Naive thymus-derived CD8-positive, alpha-beta T cell (primary cell): ENCODE measurements at regions of chr14 and their contacts with region 1.

Region 1: DNA sequence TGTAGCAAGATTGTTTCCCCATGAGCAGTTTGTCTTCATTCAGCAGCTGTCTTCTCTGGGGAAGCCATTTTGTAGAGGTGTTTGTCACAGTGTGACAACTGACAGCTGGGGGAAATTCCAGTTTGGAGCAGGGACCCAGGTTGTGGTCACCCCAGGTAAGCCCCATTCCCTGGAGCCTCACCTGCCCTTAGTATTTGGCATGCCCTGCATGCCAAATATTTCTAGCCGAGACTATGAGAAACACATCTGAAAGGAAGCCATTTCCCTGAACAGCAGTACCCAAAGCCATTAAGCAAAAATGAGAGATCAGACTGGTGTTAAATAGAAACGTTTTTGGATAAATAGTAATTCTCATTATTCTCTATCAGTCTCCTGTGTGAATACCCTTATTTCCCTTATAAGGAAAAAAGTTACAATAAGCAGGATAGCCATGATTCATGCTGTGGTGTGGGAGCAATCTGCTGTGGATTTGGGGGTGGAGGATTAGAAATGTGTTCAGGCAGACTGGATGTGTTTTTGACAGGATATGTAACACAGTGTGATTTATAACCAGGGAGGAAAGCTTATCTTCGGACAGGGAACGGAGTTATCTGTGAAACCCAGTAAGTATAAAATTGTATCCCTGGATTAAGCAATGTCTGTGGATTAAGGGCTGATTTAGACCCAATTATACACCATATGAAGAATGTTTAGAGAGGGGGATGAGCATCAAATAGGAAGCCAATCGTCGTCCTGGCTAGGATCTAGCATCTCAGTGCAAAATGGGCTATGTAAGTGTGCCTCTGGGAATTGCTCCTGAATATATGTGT is 68.9 kb downstream of the DAD1 start:
- DNase-seq: no peak
- ATAC-seq: peak; percentile 19
- H3K4me3 Mint-ChIP-seq: peak overlapping the region; percentile 80 to 94 (median 90)
- H3K27ac Mint-ChIP-seq: peak overlapping the region; percentile 94 to 99 (median 98)
- H3K4me1 Mint-ChIP-seq: peaks cover 44 to 100% (median 89%) of the 10 kb centered on the region in 4 donors
- H3K27me3 Mint-ChIP-seq: no peaks in the 10 kb centered on the region

Region 2: DNA sequence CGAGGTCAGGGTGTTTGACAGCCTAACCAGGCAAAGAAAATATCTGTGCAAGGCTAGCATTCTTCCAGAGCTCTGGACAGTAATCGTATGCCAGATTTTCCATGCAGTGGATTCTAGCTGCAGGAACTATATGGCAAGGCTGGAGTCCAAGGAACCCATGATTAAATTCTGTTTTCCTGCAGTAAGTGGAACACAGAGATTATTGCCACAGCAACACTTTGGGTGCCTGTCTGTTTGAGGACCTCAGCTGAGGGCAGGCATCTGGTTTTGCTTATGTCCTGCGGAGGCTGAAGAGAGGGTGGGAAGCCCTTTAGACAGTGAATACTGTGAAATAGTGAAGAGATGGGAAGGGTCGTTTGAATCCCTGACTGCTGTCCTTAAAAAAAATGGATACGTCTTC is 35.4 kb before region 1 on chr14:
- POLR2A ChIA-PET with region 1: no interaction called
- DNase-seq: no peak
- ATAC-seq: no peak
- H3K4me3 Mint-ChIP-seq: peak overlapping the region in 9 of 10 donors; percentile 71 to 83 (median 78)
- H3K27ac Mint-ChIP-seq: peak overlapping the region in 7 of 10 donors; percentile 9 to 91 (median 65)
- H3K4me1 Mint-ChIP-seq: peaks cover 0 to 92% (median 4%) of the 10 kb centered on the region in 4 donors
- H3K27me3 Mint-ChIP-seq: no peaks in the 10 kb centered on the region

Region 3: GRCh38 chr14:22497144-22497423 is 23.0 kb before region 1 on chr14:
- POLR2A ChIA-PET with region 1: interaction called, 405 read pairs
- DNase-seq: no peak
- ATAC-seq: peak; percentile 26 to 35
- H3K4me3 Mint-ChIP-seq: peak overlapping the region; percentile 78 to 93 (median 88)
- H3K27ac Mint-ChIP-seq: peak overlapping the region in 9 of 10 donors; percentile 88 to 98 (median 92)
- H3K4me1 Mint-ChIP-seq: peaks cover 4 to 64% (median 26%) of the 10 kb centered on the region in 4 donors
- H3K27me3 Mint-ChIP-seq: no peaks in the 10 kb centered on the region

Region 4: GRCh38 chr14:22505697-22506377 is 14.2 kb before region 1 on chr14:
- POLR2A ChIA-PET with region 1: interaction called, 405 read pairs
- DNase-seq: peak in 1 of 10 donors; percentile 26
- ATAC-seq: peak in 1 of 2 donors; percentile 38
- H3K4me3 Mint-ChIP-seq: peak overlapping the region; percentile 79 to 94 (median 86)
- H3K27ac Mint-ChIP-seq: peak overlapping the region; percentile 86 to 99 (median 98)
- H3K4me1 Mint-ChIP-seq: peaks cover 13 to 69% (median 57%) of the 10 kb centered on the region in 4 donors
- H3K27me3 Mint-ChIP-seq: no peaks in the 10 kb centered on the region

Region 5: DNA sequence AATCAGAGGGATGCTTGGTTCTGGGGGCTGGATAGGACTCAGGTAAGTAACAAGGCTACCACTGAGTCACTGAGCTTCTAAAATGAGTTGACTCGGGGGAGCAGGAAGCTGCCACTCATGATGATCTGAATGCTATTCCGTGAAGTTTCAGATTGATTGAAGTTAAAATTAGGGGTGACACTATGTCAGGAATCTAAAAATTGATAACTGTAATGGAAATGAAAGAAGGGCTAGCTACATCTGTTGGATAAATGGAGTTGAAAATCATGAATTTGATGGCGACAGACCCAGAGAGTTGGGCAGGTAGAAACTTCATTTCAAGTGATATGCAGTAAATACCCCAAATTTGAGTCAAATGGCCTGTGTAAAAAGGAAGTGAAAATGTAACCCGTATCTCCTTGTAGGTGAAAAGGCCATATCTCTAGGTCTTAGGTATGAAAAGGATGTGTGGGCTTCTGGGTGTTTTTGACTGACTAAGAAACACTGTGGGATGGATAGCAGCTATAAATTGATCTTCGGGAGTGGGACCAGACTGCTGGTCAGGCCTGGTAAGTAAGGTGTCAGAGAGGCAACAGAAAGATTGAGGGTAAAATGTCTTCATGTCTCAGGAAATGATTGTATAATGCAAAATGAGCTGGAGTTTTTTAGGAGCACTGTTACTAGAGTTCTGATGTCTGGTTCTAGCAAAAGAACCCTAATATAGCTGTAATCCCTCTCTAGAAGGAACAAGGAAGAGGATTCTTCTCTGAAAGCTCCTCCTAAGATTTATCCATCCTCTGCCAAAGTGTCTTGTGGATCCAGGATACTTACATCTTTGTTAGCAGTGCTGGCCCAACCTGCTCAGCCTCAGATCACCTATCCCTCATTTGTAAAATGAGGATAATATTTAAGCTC is 11.6 kb after region 1 on chr14:
- POLR2A ChIA-PET with region 1: interaction called, 405 read pairs
- DNase-seq: peak in 2 of 10 donors; percentile 55 to 58
- ATAC-seq: peak; percentile 53 to 69
- H3K4me3 Mint-ChIP-seq: peak overlapping the region; percentile 75 to 91 (median 88)
- H3K27ac Mint-ChIP-seq: peak overlapping the region; percentile 76 to 99 (median 96)
- H3K4me1 Mint-ChIP-seq: peaks cover 44 to 92% (median 89%) of the 10 kb centered on the region in 4 donors
- H3K27me3 Mint-ChIP-seq: no peaks in the 10 kb centered on the region

Region 6: GRCh38 chr14:22536853-22537338 is 16.8 kb after region 1 on chr14:
- POLR2A ChIA-PET with region 1: interaction called, 405 read pairs
- DNase-seq: peak in 5 of 10 donors; percentile 47 to 86 (median 69)
- ATAC-seq: peak; percentile 74 to 81
- H3K4me3 Mint-ChIP-seq: peak overlapping the region; percentile 70 to 89 (median 83)
- H3K27ac Mint-ChIP-seq: peak overlapping the region; percentile 90 to 100 (median 97)
- H3K4me1 Mint-ChIP-seq: peaks cover 57 to 96% (median 94%) of the 10 kb centered on the region in 4 donors
- H3K27me3 Mint-ChIP-seq: no peaks in the 10 kb centered on the region

Region 7: DNA sequence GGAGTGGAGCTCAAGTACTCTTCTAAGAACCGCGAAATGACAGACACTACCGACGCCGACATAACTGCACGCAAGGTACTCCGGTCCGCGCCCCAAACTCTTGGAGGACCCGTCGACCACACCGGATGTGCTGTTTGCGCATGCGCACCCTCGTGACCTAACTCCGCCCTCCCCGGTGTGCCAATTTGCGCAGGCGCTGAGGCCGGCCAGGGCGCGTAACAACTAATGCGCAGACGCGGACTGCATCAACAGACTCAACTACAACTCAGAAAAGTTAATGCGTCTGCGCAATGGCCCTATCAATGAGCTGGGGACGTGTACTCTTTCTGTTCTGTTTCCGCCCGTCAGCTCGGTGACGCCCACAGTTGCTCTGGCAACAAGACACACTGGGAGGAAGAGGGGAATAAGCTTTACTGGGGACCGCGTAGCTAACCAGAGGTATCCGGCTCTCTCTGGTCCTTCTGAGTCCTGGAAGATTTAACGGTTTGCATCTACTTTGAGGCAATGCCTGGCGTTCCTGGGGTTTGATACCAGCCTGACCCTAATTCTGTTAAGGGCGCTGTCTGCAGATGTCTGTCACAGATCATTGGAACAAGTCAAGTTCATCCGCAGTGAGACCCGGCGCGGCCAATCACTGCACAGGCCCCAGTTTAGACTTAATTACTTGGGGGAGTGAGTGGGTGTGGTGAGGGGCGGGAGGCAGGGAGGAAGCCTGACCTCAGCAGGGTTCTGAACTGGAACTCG is 69.2 kb after region 1 on chr14 and contains the start of gene DAD1:
- POLR2A ChIA-PET with region 1: no interaction called
- DNase-seq: peak; percentile 98 to 100 (median 100)
- ATAC-seq: peak; percentile 88 to 93
- H3K4me3 Mint-ChIP-seq: peak within 1 kb of the TSS; percentile 90 to 99 (median 98)
- H3K27ac Mint-ChIP-seq: peak within 1 kb of the TSS; percentile 95 to 100 (median 99)
- H3K4me1 Mint-ChIP-seq: peaks cover 34 to 60% (median 55%) of the 10 kb centered on the region in 4 donors
- H3K27me3 Mint-ChIP-seq: peaks cover 0 to 5% (median 0%) of the 10 kb centered on the region in 5 donors
- polyA plus RNA-seq, gene DAD1: 610 to 660 (median 642) TPM

Region 8: DNA sequence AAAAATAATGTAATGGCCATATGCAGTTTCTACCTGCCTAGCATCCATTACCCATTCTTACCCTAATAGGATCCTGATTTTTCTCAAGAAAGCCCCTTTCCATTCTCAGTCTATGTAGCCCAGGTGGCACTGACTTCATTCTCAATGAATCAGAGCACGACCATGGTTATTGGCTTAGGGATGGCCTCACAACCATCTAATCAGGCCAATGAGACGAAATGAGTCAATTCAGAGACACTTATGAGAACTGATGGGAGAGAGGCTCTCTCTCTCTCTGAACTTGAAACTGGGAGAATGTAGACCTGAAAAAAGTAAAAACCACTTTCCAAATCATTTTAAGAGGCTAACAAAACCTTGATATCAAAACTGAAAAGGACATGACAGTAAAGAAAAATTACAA is 201.1 kb after region 1 on chr14:
- POLR2A ChIA-PET with region 1: no interaction called
- DNase-seq: no peak
- ATAC-seq: no peak
- H3K4me3 Mint-ChIP-seq: no peak overlapping the region
- H3K27ac Mint-ChIP-seq: no peak overlapping the region
- H3K4me1 Mint-ChIP-seq: no peaks in the 10 kb centered on the region
- H3K27me3 Mint-ChIP-seq: no peaks in the 10 kb centered on the region